Calu3 (cell line): ENCODE measurements at regions of chr9 and their contacts with region 1.

Region 1: DNA sequence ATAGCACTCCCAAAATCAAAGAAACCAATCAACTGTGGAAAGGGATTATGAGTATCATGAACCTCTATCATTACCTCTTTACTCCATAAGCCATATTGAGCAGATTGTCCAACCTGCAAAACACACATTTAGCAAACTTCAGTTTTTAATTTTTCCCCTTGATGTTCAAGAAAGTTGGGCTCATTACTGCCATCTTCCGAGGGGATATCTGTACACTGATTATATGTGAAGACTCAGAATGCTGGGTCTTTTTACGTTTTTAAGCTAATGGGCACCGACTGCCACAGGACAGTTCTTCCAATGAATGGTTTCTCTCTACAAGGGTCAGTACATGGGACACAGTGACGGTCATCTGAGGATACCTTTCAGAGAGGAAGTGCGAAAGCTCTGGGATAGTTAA is 132.7 kb downstream of the ELAVL2 start:
- DNase-seq: no peak
- H3K4me3 Mint-ChIP-seq: no peak overlapping the region
- H3K27ac Mint-ChIP-seq: no peak overlapping the region
- H3K4me1 Mint-ChIP-seq: no peaks in the 10 kb centered on the region
- H3K27me3 Mint-ChIP-seq: no peaks in the 10 kb centered on the region
- CTCF ChIP-seq: no peak

Region 2: DNA sequence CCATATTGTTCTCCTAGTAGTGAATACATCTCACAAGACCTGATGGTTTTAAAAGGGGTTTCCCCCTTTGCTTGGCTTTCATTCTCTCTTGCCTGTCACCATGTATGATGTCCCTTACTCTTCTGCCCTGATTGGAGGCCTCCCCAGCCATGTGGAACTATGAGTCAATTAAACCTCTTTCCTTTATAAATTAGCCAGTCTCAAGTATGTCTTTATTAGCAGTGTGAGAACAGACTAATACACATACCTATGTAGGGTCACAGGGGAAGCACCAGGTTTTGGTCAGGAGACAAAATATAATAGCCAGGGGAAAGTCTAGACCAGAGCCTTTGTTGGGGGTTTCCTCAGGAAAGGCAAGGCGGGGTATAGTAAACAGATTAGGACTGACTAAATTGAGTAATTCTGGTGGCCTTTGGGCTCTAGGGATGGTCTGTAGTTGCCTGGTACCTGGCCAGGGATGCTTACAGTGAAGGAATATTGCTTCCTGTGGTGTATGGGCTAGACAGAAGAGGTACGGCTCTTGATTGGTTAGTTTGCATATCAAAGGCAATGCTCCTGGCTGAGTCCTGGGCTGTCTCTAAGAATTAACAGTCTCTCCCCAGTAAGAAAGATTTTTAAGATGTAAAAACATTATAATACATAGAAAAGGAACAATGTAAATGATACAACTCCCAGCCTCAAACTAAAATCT is 121.8 kb before region 1 on chr9:
- CTCF ChIA-PET with region 1: no interaction called
- intact Hi-C with region 1: loop called (anchors 10 kb)
- DNase-seq: no peak
- H3K4me3 Mint-ChIP-seq: no peak overlapping the region
- H3K27ac Mint-ChIP-seq: no peak overlapping the region
- H3K4me1 Mint-ChIP-seq: no peaks in the 10 kb centered on the region
- H3K27me3 Mint-ChIP-seq: no peaks in the 10 kb centered on the region
- CTCF ChIP-seq: no peak

Region 3: GRCh38 chr9:23598994-23599393 is 94.4 kb before region 1 on chr9:
- CTCF ChIA-PET with region 1: no interaction called
- intact Hi-C with region 1: no loop called
- DNase-seq: no peak
- H3K4me3 Mint-ChIP-seq: no peak overlapping the region
- H3K27ac Mint-ChIP-seq: peak overlapping the region; percentile 63
- H3K4me1 Mint-ChIP-seq: peaks cover 26% of the 10 kb centered on the region
- H3K27me3 Mint-ChIP-seq: no peaks in the 10 kb centered on the region
- CTCF ChIP-seq: no peak